ENCODE measurements at regions of chr10 and their contacts with region 1.

Region 1: DNA sequence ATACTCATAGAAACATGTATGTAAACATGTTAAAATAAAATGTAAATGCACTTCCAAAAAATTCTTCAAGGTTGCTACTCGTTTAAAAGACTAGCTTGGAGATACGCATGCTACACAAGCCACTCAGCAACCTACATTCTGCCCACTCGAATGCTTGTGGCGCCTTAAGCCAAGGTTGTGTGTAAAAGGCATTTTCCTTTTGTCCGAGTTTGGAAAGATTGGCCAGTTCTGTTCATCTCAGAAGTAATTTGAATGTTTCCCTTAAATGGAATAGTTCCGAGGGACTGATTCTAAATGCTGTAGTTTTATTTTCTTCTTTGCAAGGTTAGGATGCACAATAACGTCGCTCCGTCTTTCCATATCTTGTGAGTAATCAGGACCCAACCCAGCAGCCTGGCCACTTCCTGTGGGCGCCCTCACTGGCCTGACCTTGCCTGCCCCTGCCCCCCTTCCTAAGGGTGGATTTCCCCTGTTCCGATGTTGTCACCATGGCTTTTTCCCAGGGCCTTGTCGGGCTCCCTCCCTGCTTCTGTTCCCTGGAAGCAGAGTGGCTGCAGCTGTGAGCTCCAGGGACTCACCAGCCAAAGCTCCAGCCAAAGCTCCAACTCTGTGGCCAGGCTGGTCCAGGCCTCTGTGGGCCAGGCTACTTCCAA is 70.6 kb downstream of the PTPRE start:
- DNase-seq: peak; percentile 85 to 89 (median 89)
- ATAC-seq: peak; percentile 93 to 96
- H3K4me3 ChIP-seq: no peak overlapping the region
- H3K27ac ChIP-seq: peak overlapping the region; percentile 48
- H3K4me1 ChIP-seq: peaks cover 11% of the 10 kb centered on the region
- H3K27me3 ChIP-seq: no peaks in the 10 kb centered on the region

Region 2: DNA sequence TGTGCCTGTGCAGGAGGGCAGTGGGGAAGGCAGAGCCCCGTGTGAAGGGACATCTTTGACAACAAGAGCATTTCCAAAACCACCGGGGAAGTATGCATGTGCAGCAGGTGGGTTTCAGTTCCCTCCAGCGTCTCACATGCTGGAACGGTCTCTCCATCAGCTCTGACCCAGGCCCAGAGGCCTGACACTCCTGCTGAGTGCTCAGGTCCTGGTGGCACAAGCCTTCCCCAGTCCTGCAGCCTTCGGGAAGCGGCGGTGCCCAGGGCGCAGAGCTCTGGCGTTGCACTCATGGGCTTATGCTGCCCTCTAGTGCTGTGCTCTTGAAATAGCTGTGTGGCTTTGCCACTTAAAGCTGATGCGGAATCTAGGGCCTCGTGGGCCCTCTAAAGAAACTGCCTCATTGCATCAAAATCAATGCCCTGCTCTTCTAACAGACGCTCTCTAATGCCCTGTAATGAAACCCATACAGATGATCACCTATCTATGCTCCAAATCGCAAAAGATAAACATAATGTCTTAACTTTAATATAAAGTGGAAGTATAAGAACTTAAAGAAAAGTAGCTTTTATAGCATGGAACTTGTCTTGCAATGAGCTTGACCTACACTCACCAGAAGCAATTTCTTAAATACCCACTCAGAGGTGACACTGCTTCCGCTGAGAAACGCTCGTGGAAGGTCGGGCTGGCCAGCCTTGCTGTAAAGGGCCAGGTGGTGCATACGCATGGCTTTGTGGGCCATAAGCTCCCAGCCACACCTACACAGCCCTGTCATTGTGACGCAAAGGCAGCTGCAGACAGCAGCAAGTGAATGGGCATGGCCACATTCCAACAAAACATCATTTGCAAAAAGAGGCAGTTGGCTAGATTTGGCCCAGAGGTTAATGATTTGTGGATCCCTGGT is 123.4 kb before region 1 on chr10:
- intact Hi-C with region 1: no loop called
- DNase-seq: peak; percentile 59 to 83 (median 78)
- ATAC-seq: peak; percentile 89
- H3K4me3 ChIP-seq: no peak overlapping the region
- H3K27ac ChIP-seq: no peak overlapping the region
- H3K4me1 ChIP-seq: no peaks in the 10 kb centered on the region
- H3K27me3 ChIP-seq: no peaks in the 10 kb centered on the region

Region 3: GRCh38 chr10:127919418-127920271 is 57.8 kb before region 1 on chr10:
- intact Hi-C with region 1: loop called in 1 of 4 experiments (anchors 10 kb)
- DNase-seq: peak in 1 of 3 donors; percentile 56
- ATAC-seq: peak in 1 of 2 donors; percentile 17
- H3K4me3 ChIP-seq: no peak overlapping the region
- H3K27ac ChIP-seq: peak overlapping the region; percentile 43
- H3K4me1 ChIP-seq: peaks cover 16% of the 10 kb centered on the region
- H3K27me3 ChIP-seq: no peaks in the 10 kb centered on the region

Measured in right cardiac atrium (tissue), 5 donors.